Right ventricle myocardium inferior (tissue), 1 donor: ENCODE measurements at regions of chr22 and their contacts with region 1.

Region 1: GRCh38 chr22:50582562-50583293 is at the start of gene CHKB:
- DNase-seq: peak; percentile 99
- ATAC-seq: peak; percentile 96
- total RNA-seq, gene CHKB: 37.8 TPM

Region 2: GRCh38 chr22:50507991-50508884 is 74.5 kb before region 1 on chr22 and contains the start of gene NCAPH2:
- intact Hi-C with region 1: loop called (anchors 5 kb)
- DNase-seq: peak; percentile 99
- ATAC-seq: peak; percentile 79
- total RNA-seq, gene NCAPH2: 26.7 TPM